Endothelial cell of umbilical vein (primary cell): ENCODE measurements at regions of chr5 and their contacts with region 1.

Region 1: GRCh38 chr5:87780831-87781760 is 368.4 kb upstream of the CCNH start:
- DNase-seq: peak; percentile 74
- H3K4me3 ChIP-seq: no peak overlapping the region
- H3K27ac ChIP-seq: no peak overlapping the region
- H3K4me1 ChIP-seq: no peaks in the 10 kb centered on the region
- H3K27me3 ChIP-seq: peaks cover 0 to 20% of the 10 kb centered on the region in 2 experiments
- CTCF ChIP-seq: peak; percentile 80 to 82
- POLR2A ChIP-seq: no peak

Region 2: DNA sequence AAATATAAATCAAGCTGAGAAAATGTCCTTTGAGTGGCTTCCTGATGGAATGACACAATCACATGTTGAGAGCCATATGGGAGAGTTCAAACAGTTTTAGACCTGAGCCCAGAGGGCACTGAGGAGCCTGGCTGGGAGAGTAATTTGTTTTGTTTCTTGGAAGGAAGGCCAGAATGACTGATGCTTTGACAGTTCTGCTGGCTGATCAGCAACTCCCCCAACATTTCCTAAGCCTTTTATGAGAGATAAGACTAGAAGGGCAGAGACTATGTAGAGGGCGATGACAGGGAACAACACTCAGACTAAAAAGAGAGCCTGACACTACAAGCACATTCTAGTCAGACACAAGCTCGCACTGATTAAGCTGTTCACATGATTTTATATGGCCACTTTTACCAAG is 994.1 kb before region 1 on chr5:
- CTCF ChIA-PET with region 1: no interaction called
- POLR2A ChIA-PET with region 1: no interaction called
- dilution Hi-C with region 1: no loop called
- intact Hi-C with region 1: no loop called
- DNase-seq: no peak
- H3K4me3 ChIP-seq: no peak overlapping the region
- H3K27ac ChIP-seq: no peak overlapping the region
- H3K4me1 ChIP-seq: no peaks in the 10 kb centered on the region
- H3K27me3 ChIP-seq: no peaks in the 10 kb centered on the region
- CTCF ChIP-seq: no peak
- POLR2A ChIP-seq: no peak

Region 3: DNA sequence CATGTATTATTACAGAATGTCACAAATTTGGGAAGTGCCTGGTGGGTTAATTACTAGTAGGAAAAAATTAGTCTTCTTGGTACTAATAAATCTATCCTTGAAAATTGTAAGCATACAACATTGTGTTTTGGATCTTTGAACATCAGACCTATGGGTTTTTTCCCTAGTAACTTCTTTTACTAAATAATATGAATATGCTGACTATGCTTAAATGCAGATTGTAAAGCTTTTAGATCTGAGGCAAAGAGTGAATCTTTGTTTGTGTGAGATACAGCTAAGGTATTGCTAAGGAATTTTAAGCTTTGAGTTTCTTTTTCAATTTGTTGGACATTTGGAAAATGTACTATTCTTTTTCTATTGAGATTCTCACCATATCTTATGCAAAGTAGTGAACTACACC is 22.3 kb after region 1 on chr5:
- CTCF ChIA-PET with region 1: interaction called, 12 read pairs
- POLR2A ChIA-PET with region 1: no interaction called
- dilution Hi-C with region 1: no loop called
- intact Hi-C with region 1: no loop called
- DNase-seq: no peak
- H3K4me3 ChIP-seq: no peak overlapping the region
- H3K27ac ChIP-seq: no peak overlapping the region
- H3K4me1 ChIP-seq: no peaks in the 10 kb centered on the region
- H3K27me3 ChIP-seq: no peaks in the 10 kb centered on the region
- CTCF ChIP-seq: no peak
- POLR2A ChIP-seq: no peak

Region 4: DNA sequence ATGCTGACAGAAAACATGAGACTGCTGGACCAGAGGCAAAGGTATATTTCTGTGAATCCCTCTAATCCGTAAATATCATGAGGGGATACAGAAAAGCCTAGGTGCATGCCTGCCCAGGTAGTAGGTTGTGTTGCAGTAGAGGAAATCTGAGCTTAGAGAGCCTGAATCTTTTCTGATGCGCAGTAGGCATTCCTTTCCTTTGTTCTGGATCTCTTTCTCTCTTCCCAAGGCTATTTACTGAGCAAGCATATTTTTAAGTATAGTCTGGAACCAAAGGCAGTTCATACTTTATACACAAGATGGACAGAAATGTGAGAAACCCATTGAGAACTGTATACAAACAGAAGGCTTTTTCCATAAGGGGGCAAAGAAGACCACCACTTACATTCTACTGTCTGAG is 128.3 kb after region 1 on chr5:
- CTCF ChIA-PET with region 1: no interaction called
- POLR2A ChIA-PET with region 1: no interaction called
- dilution Hi-C with region 1: no loop called
- intact Hi-C with region 1: no loop called
- DNase-seq: no peak
- H3K4me3 ChIP-seq: no peak overlapping the region
- H3K27ac ChIP-seq: no peak overlapping the region
- H3K4me1 ChIP-seq: no peaks in the 10 kb centered on the region
- H3K27me3 ChIP-seq: no peaks in the 10 kb centered on the region
- CTCF ChIP-seq: no peak
- POLR2A ChIP-seq: no peak

Region 5: GRCh38 chr5:88660947-88661805 is 880.1 kb after region 1 on chr5:
- CTCF ChIA-PET with region 1: interaction called, 13 read pairs
- POLR2A ChIA-PET with region 1: no interaction called
- dilution Hi-C with region 1: no loop called
- intact Hi-C with region 1: no loop called
- DNase-seq: peak; percentile 51
- H3K4me3 ChIP-seq: peak overlapping the region in 2 of 3 experiments; percentile 19 to 34
- H3K27ac ChIP-seq: no peak overlapping the region
- H3K4me1 ChIP-seq: peaks cover 5% of the 10 kb centered on the region
- H3K27me3 ChIP-seq: peaks cover 60 to 97% of the 10 kb centered on the region in 2 experiments
- CTCF ChIP-seq: no peak
- POLR2A ChIP-seq: no peak

Region 6: DNA sequence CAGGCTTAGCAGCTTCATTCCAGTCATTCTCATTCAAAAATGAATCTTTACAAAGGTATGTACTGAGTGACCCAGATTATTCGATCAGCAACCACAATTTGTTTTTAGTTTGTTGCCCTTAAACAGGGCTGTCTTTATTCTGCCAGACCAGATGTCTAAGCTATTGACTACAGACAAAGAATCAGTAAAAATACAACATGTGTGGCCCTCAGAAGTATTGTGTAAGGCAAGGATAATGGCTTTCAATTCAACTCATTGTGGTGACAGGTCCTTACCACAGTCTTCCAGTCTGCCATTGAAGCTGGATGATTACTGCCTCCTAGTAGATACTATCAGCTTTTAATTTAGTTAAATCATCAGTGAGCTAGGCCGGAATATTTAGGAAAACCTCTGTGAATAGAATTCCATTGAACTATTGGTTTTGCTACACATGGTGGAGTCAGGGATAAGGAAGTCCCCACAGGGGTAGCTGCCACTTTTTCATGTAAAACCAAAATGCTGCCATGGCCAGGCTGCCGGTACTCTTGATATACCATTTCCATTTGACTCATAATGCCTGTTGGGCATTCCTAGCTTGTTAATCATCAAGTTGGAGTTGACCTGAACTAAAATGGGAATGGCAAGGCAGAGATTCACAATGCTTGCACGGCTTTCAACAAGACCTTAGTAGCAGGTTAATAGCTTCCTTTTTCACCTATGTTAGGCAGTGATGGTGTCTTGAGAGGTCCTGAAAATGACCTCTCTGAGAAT is 926.3 kb after region 1 on chr5:
- CTCF ChIA-PET with region 1: interaction called, 28 read pairs
- POLR2A ChIA-PET with region 1: no interaction called
- dilution Hi-C with region 1: no loop called
- intact Hi-C with region 1: no loop called
- DNase-seq: no peak
- H3K4me3 ChIP-seq: no peak overlapping the region
- H3K27ac ChIP-seq: no peak overlapping the region
- H3K4me1 ChIP-seq: no peaks in the 10 kb centered on the region
- H3K27me3 ChIP-seq: peaks cover 10 to 12% of the 10 kb centered on the region in 2 experiments
- CTCF ChIP-seq: no peak
- POLR2A ChIP-seq: no peak

Region 7: DNA sequence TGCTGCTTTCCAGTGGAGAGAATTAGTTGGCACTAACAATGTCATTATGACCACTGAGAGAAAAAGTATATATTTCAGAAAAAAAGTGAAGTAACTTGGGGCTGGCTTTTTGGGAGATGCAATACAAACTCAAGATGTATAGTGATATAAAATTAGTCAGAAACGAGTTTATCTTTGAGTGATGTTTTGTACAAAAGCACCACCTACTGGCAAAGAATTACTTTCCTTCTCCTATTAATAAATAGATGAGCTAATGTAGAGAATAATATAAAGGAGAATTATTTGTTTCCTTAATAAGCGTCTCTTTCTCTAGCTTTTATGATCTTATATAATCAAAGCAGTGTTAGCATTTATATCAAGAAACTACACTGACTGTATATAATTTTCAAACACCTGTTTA is 943.1 kb after region 1 on chr5:
- CTCF ChIA-PET with region 1: interaction called, 398 read pairs
- POLR2A ChIA-PET with region 1: no interaction called
- dilution Hi-C with region 1: no loop called
- intact Hi-C with region 1: loop called (anchors 1 kb)
- DNase-seq: peak; percentile 32
- H3K4me3 ChIP-seq: no peak overlapping the region
- H3K27ac ChIP-seq: no peak overlapping the region
- H3K4me1 ChIP-seq: no peaks in the 10 kb centered on the region
- H3K27me3 ChIP-seq: no peaks in the 10 kb centered on the region
- CTCF ChIP-seq: no peak
- POLR2A ChIP-seq: no peak